Activated CD4-positive, alpha-beta memory T cell treated with anti-CD3 and anti-CD28 coated beads, Interleukin-2, amount 10 ng/mL, durations not matched to agents 7 days and 5 days (primary cell): ENCODE measurements at regions of chr6 and their contacts with region 1.

Region 1: GRCh38 chr6:33579828-33580714 is at the start of gene BAK1:
- DNase-seq: peak; percentile 90
- H3K4me3 Mint-ChIP-seq: peak within 1 kb of the TSS; percentile 94
- H3K27ac Mint-ChIP-seq: peak within 1 kb of the TSS; percentile 96
- H3K4me1 Mint-ChIP-seq: peaks cover 45% of the 10 kb centered on the region
- H3K27me3 Mint-ChIP-seq: no peaks in the 10 kb centered on the region
- total RNA-seq, gene BAK1: 97.9 to 100 TPM

Region 2: GRCh38 chr6:33336495-33336894 is 243.6 kb before region 1 on chr6:
- CTCF ChIA-PET with region 1: no interaction called
- POLR2A ChIA-PET with region 1: no interaction called
- DNase-seq: no peak
- H3K4me3 Mint-ChIP-seq: no peak overlapping the region
- H3K27ac Mint-ChIP-seq: no peak overlapping the region
- H3K4me1 Mint-ChIP-seq: peaks cover 7% of the 10 kb centered on the region
- H3K27me3 Mint-ChIP-seq: no peaks in the 10 kb centered on the region

Region 3: GRCh38 chr6:33430991-33431879 is 148.8 kb before region 1 on chr6:
- CTCF ChIA-PET with region 1: interaction called, 5 read pairs
- POLR2A ChIA-PET with region 1: interaction called, 19 read pairs
- DNase-seq: peak; percentile 86
- H3K4me3 Mint-ChIP-seq: peak overlapping the region; percentile 84
- H3K27ac Mint-ChIP-seq: peak overlapping the region; percentile 90
- H3K4me1 Mint-ChIP-seq: peaks cover 65% of the 10 kb centered on the region
- H3K27me3 Mint-ChIP-seq: no peaks in the 10 kb centered on the region

Region 4: DNA sequence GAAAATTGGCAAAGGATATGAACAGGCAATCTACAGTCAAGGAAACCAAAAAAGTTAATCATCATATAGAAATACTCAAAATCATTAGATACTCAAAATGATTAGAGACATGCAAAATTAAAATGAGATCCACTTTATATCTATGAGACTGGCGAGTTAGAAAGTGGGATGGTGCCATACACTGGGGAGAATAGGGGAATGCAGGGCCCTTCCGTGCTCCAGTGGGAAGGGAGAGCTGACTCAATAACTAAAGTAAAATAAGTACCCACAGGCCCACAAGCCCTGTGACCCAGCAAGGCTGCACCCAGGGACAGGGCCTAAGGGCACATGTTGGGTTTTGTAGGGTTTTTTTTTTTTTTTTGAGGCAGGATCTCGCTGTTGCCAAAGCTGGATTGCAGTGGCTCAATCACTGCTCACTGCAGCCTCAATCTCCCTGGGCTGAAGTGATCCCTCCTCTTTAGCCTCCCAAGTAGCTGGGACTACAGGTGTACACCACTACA is 44.9 kb before region 1 on chr6:
- CTCF ChIA-PET with region 1: interaction called, 3 read pairs
- POLR2A ChIA-PET with region 1: interaction called, 15 read pairs
- DNase-seq: no peak
- H3K4me3 Mint-ChIP-seq: no peak overlapping the region
- H3K27ac Mint-ChIP-seq: no peak overlapping the region
- H3K4me1 Mint-ChIP-seq: peaks cover 25% of the 10 kb centered on the region
- H3K27me3 Mint-ChIP-seq: no peaks in the 10 kb centered on the region

Region 5: GRCh38 chr6:33607784-33608161 is 27.7 kb after region 1 on chr6:
- CTCF ChIA-PET with region 1: interaction called, 34 read pairs
- POLR2A ChIA-PET with region 1: interaction called, 13 read pairs
- DNase-seq: peak; percentile 67
- H3K4me3 Mint-ChIP-seq: no peak overlapping the region
- H3K27ac Mint-ChIP-seq: no peak overlapping the region
- H3K4me1 Mint-ChIP-seq: peaks cover 6% of the 10 kb centered on the region
- H3K27me3 Mint-ChIP-seq: peaks cover 16% of the 10 kb centered on the region

Region 6: DNA sequence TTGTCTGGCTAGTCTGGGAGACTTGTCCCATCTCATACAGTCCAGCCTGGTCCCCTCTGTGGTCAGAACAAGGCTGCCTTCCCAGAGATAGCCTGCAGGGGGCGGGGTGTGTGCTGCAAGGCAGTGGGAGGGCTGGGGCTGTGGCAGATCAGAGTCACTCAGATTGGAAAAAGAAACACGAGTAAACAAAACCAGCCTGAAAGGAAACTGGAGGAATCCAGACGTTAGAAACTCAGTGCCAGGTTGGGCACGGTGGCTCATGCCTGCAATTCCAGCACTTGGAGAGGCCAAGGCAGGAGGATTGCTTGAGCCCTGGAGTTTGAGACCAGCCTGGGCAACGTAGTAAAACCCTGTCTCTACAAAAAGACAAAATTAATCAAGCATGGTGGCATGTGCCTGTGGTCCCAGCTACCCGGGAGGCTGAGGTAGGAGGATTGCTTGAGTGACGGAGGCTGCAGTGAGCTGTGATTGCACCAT is 188.6 kb after region 1 on chr6:
- CTCF ChIA-PET with region 1: no interaction called
- POLR2A ChIA-PET with region 1: no interaction called
- DNase-seq: peak; percentile 79
- H3K4me3 Mint-ChIP-seq: no peak overlapping the region
- H3K27ac Mint-ChIP-seq: no peak overlapping the region
- H3K4me1 Mint-ChIP-seq: peaks cover 7% of the 10 kb centered on the region
- H3K27me3 Mint-ChIP-seq: peaks cover 8% of the 10 kb centered on the region